Heart right ventricle (tissue), 16 donors: ENCODE measurements at regions of chr2 and their contacts with region 1.

Region 1: DNA sequence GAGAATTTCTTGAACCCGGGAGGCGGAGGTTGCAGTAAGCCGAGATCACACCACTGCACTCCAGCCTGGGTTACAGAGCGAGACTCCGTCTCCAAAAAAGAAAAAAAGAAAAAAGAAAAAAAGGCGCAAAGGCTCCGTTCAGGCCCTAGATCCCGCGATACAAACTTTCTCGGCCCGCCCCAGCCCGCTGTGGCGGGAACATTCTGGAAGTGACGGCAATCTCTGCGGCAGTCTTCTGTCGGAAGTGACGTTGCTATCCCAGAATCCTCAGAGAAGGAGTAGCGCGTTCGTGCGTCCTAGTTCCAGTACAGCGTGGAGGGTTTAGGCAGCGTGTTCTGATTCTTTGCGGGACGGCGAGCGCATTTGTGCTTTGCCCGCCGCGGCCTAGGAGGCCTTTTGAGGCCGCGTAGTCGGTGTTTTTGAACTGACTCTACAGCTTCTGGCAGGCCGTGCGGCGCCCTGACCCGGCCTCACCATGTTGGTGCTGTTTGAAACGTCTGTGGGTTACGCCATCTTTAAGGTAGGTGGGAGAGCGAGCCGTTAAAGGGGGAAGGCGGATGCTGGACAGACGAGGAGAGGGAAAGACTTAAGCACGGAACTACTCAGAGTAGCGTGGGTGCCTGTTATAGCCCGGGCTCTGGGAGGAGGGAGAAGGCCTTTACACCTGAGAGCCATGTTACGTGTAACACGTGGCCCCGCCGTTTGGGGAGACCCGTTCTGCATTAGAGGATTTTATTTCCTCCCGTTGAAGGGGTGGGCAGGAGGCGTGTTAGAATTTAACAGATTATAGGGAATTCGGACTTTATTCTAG is at the start of gene NOP58:
- DNase-seq: peak; percentile 83 to 95
- ATAC-seq: peak; percentile 97 to 99 (median 99)
- H3K4me3 ChIP-seq: peak within 1 kb of the TSS; percentile 60 to 97 (median 85)
- H3K27ac ChIP-seq: peak within 1 kb of the TSS; percentile 48 to 98 (median 94)
- H3K4me1 ChIP-seq: peaks cover 0 to 43% (median 20%) of the 10 kb centered on the region in 9 donors
- H3K27me3 ChIP-seq: no peaks in the 10 kb centered on the region
- CTCF ChIP-seq: peak in 1 of 9 donors; percentile 6
- total RNA-seq, gene NOP58: 18.7 to 28.8 (median 21.9) TPM

Region 2: GRCh38 chr2:202185816-202186221 is 79.9 kb before region 1 on chr2:
- intact Hi-C with region 1: no loop called
- DNase-seq: no peak
- ATAC-seq: no peak
- H3K4me3 ChIP-seq: no peak overlapping the region
- H3K27ac ChIP-seq: no peak overlapping the region
- H3K4me1 ChIP-seq: no peaks in the 10 kb centered on the region
- H3K27me3 ChIP-seq: peaks cover 0 to 6% (median 0%) of the 10 kb centered on the region in 7 donors
- CTCF ChIP-seq: no peak

Region 3: GRCh38 chr2:202238234-202239197 is 27.2 kb before region 1 on chr2 and contains the start of gene SUMO1:
- intact Hi-C with region 1: loop called in 1 of 10 experiments (anchors 2 kb)
- DNase-seq: peak; percentile 90 to 91
- ATAC-seq: peak; percentile 94 to 98 (median 96)
- H3K4me3 ChIP-seq: peak within 1 kb of the TSS; percentile 62 to 99 (median 93)
- H3K27ac ChIP-seq: peak within 1 kb of the TSS; percentile 44 to 95 (median 91)
- H3K4me1 ChIP-seq: peaks cover 3 to 42% (median 24%) of the 10 kb centered on the region in 9 donors
- H3K27me3 ChIP-seq: no peaks in the 10 kb centered on the region
- CTCF ChIP-seq: peak in 1 of 9 donors; percentile 2
- total RNA-seq, gene SUMO1: 62.2 to 72.8 (median 68.5) TPM

Region 4: GRCh38 chr2:202494300-202495229 is 228.9 kb after region 1 on chr2:
- intact Hi-C with region 1: loop called in 1 of 10 experiments (anchors 10 kb)
- DNase-seq: peak in 1 of 2 donors; percentile 31
- ATAC-seq: peak; percentile 52 to 83 (median 68)
- H3K4me3 ChIP-seq: no peak overlapping the region
- H3K27ac ChIP-seq: peak overlapping the region in 1 of 10 donors; percentile 11
- H3K4me1 ChIP-seq: peaks cover 0 to 56% (median 27%) of the 10 kb centered on the region in 9 donors
- H3K27me3 ChIP-seq: no peaks in the 10 kb centered on the region
- CTCF ChIP-seq: no peak